Lower leg skin (tissue), 4 donors: ENCODE measurements at regions of chr9 and their contacts with region 1.

Region 1: GRCh38 chr9:127201071-127201541 is 63.5 kb upstream of the GARNL3 start:
- DNase-seq: no peak
- H3K4me3 ChIP-seq: no peak overlapping the region
- CTCF ChIP-seq: no peak
- POLR2A ChIP-seq: no peak

Region 2: GRCh38 chr9:126942399-126942798 is 258.7 kb before region 1 on chr9:
- intact Hi-C with region 1: loop called (anchors 2 kb)
- DNase-seq: no peak
- H3K4me3 ChIP-seq: no peak overlapping the region
- CTCF ChIP-seq: no peak
- POLR2A ChIP-seq: no peak

Region 3: DNA sequence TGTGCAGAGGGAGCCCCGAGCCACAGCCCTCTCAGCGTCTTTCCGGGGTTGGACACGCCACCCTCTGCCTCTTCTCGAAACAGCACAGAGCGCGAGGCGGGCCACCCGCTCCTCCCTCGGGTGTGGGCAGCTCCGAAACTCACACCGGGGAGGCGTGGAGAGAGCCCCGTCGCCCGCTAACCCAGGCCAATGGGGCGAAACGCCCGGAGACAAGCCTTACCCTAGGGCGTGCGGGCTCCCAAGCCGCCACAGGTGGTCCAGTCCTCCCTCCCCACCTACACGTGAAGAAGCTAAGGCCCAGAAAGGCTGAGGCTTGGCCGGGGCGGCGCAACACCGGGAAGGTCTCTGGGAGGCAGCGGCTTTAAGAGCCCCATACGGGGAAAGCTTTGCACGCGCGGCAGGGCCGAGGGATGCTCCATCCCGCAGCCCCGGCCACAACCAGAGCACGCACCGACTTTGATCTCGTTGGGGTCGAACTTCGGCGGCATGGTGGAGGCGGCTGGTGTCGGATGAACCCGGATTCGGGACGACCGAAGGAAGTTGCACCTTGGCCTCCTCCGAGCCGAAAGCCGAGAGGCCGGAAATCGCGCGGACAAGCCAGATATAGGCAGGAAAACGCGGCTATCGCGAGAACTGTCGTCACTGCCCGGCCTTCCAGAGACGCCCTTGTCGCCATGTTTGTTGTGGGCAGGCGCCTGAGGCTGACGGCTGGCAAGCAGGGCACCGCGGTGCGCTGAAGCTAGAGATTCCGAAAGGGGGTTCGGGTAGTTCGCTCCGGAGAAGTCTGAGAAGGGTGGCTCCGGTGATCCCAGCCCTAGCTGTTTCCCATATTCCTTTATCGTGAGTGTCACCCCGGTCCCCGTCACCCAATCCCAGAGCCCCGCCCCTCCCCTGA is 250.0 kb after region 1 on chr9 and contains the starts of genes LRSAM1 and RPL12:
- intact Hi-C with region 1: no loop called
- DNase-seq: peak; percentile 96 to 100
- H3K4me3 ChIP-seq: peak within 1 kb of the TSS; percentile 97
- CTCF ChIP-seq: no peak
- POLR2A ChIP-seq: peak in 1 of 2 donors; percentile 98
- total RNA-seq, gene LRSAM1: 37.9 to 47.9 (median 41.9) TPM
- total RNA-seq, gene RPL12: 2,461 to 2,856 (median 2,671) TPM